Uterus (tissue), 4 donors: ENCODE measurements at regions of chr14 and their contacts with region 1.

Region 1: GRCh38 chr14:51277753-51278415 is 37.8 kb downstream of the TMX1 start:
- DNase-seq: no peak
- H3K4me3 ChIP-seq: no peak overlapping the region
- H3K27ac ChIP-seq: no peak overlapping the region
- H3K4me1 ChIP-seq: no peaks in the 10 kb centered on the region
- H3K27me3 ChIP-seq: no peaks in the 10 kb centered on the region
- CTCF ChIP-seq: no peak
- POLR2A ChIP-seq: no peak

Region 2: GRCh38 chr14:51310505-51310944 is 32.6 kb after region 1 on chr14:
- intact Hi-C with region 1: no loop called
- DNase-seq: peak; percentile 45 to 72
- H3K4me3 ChIP-seq: no peak overlapping the region
- H3K27ac ChIP-seq: peak overlapping the region; percentile 25 to 69
- H3K4me1 ChIP-seq: no peaks in the 10 kb centered on the region
- H3K27me3 ChIP-seq: no peaks in the 10 kb centered on the region
- CTCF ChIP-seq: no peak
- POLR2A ChIP-seq: no peak

Region 3: GRCh38 chr14:51979088-51979709 is 701.3 kb after region 1 on chr14:
- intact Hi-C with region 1: loop called (anchors 10 kb)
- DNase-seq: peak; percentile 82
- H3K4me3 ChIP-seq: no peak overlapping the region
- H3K27ac ChIP-seq: no peak overlapping the region
- H3K4me1 ChIP-seq: no peaks in the 10 kb centered on the region
- H3K27me3 ChIP-seq: no peaks in the 10 kb centered on the region
- CTCF ChIP-seq: peak; percentile 74 to 84 (median 78)
- POLR2A ChIP-seq: no peak